A549 (cell line): ENCODE measurements at regions of chr11 and their contacts with region 1.

Region 1: GRCh38 chr11:130002846-130003716 is 446 bp upstream of the PRDM10 start:
- DNase-seq: peak; percentile 94 to 95
- ATAC-seq: peak; percentile 85 to 89
- H3K4me3 ChIP-seq: peak overlapping the region; percentile 63
- H3K27ac ChIP-seq: peak overlapping the region; percentile 99 to 100
- H3K4me1 ChIP-seq: peaks cover 19% of the 10 kb centered on the region
- CTCF ChIP-seq: no peak
- EP300 ChIP-seq: no peak
- POLR2A ChIP-seq: peak; percentile 36; the same call in 1 of the 2 replicates
- RAD21 ChIP-seq: no peak

Region 2: GRCh38 chr11:129815596-129816461 is 187.3 kb before region 1 on chr11 and contains the start of gene TMEM45B:
- CTCF ChIA-PET with region 1: no interaction called
- POLR2A ChIA-PET with region 1: no interaction called
- DNase-seq: no peak
- ATAC-seq: peak; percentile 48 to 63; a peak in 5 of 6 replicates
- H3K4me3 ChIP-seq: peak within 1 kb of the TSS; percentile 34; the same call in 2 of the 3 replicates
- H3K27ac ChIP-seq: no peak within 1 kb of the TSS
- H3K4me1 ChIP-seq: no peaks in the 10 kb centered on the region
- CTCF ChIP-seq: no peak
- EP300 ChIP-seq: no peak
- POLR2A ChIP-seq: no peak
- RAD21 ChIP-seq: no peak
- polyA plus RNA-seq, gene TMEM45B: 0.13 and 0.44 TPM in 2 replicates

Region 3: DNA sequence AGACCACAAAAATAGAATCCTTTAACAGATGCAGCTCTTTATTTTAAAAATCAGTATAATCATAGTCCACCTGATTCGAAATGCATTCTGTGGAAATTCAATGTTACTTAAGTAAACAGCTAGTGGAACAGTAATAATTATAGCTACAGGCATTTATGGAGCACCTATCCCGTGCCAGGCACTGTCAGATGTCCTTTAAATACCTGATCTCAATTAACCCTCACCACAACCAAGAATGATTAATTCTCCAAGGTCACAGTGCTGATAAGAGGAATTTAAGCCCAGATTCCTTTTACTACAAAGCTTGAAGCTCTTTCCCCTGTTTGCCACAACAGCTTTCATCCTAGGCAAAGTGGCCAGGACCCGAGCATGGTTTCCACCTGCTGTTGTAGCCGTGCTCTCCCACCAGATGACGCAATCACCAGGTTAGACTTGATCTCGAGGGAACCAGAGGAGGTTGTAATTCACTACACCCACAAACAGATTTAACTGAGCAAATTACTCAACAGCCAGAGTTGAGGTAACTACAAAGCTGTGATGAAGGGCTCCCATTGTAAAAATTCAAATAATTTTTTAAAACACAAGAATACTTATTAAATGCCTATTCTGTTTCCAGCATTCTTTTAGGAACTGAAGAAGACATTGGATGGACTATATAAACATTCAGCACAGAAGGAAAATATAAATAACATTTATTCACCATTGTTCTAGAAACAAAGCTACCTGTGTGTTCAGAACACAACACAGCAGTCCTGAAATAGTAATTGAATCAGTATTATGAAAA is 10.7 kb before region 1 on chr11:
- CTCF ChIA-PET with region 1: interaction called, 5 read pairs
- POLR2A ChIA-PET with region 1: interaction called, 18 read pairs
- DNase-seq: peak; percentile 15 to 20
- ATAC-seq: 0 out of 6 replicates have a peak, but pooled peaks of 1 of the 2 experiments have one; percentile 38
- H3K4me3 ChIP-seq: no peak overlapping the region
- H3K27ac ChIP-seq: no peak overlapping the region
- H3K4me1 ChIP-seq: peaks cover 6% of the 10 kb centered on the region; the same call in 1 of the 3 replicates
- CTCF ChIP-seq: no peak
- EP300 ChIP-seq: no peak
- POLR2A ChIP-seq: no peak
- RAD21 ChIP-seq: peak in 1 of 2 experiments; percentile 10; a peak in 1 of 5 replicates

Region 4: DNA sequence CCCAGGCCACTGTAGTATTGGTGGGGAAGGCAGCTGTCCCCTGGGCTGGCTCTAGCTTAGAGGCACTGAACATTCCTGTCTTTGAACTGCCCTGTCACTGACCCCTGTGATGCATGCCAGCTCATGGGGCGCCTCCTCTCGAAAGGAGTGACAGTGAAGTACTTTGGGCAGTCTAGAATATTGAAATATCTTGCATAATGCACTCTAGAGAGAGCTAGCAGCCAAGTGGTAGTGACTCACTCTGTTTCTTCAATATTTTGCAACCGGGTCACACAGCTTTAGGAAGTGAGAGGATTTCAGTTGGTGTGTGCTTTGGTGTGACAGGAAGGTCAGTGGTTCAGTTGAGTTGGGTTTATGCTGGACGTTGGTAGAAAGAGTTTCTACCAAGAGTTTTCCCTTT is 121.0 kb after region 1 on chr11:
- CTCF ChIA-PET with region 1: interaction called, 4 read pairs
- POLR2A ChIA-PET with region 1: interaction called, 24 read pairs
- DNase-seq: peak; percentile 22 to 70
- ATAC-seq: peak; percentile 94 to 99
- H3K4me3 ChIP-seq: no peak overlapping the region
- H3K27ac ChIP-seq: peak overlapping the region; percentile 46 to 86
- H3K4me1 ChIP-seq: peaks cover 16% of the 10 kb centered on the region
- CTCF ChIP-seq: no peak
- EP300 ChIP-seq: peak in 1 of 2 experiments; percentile 34; a peak in 1 of 5 replicates
- POLR2A ChIP-seq: no peak
- RAD21 ChIP-seq: peak in 1 of 2 experiments; percentile 13; a peak in 1 of 5 replicates

Region 5: GRCh38 chr11:130145975-130146776 is 143.1 kb after region 1 on chr11:
- CTCF ChIA-PET with region 1: no interaction called
- POLR2A ChIA-PET with region 1: interaction called, 19 read pairs
- DNase-seq: peak; percentile 52 to 54
- ATAC-seq: peak; percentile 96 to 98
- H3K4me3 ChIP-seq: no peak overlapping the region
- H3K27ac ChIP-seq: peak overlapping the region in 1 of 2 experiments; percentile 61; a peak in 3 of 6 replicates
- H3K4me1 ChIP-seq: peaks cover 13% of the 10 kb centered on the region
- CTCF ChIP-seq: peak; percentile 25; the same call in 2 of the 3 replicates
- EP300 ChIP-seq: no peak
- POLR2A ChIP-seq: no peak
- RAD21 ChIP-seq: peak; percentile 28 to 36; a peak in 2 of 5 replicates

Region 6: DNA sequence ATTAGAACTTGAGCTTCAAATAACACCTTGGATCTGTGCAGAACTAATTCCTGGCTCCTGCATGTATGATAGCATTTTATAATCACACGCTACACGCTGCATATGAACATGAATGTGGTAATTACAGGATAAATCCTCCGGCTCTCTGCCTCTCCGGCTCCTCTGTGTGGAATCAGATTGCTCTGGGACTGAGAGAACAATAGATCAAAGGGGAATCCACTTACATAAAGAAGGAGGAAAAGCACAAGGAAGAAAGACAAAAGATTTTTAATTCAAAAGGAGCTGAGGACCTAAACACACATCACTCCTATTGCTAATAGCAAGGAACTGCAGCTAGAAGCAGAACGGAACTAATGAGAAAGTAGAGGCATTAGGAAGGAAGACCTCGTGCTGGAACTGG is 1608.2 kb after region 1 on chr11:
- CTCF ChIA-PET with region 1: no interaction called
- POLR2A ChIA-PET with region 1: interaction called, 10 read pairs
- DNase-seq: no peak
- ATAC-seq: no peak
- H3K4me3 ChIP-seq: no peak overlapping the region
- H3K27ac ChIP-seq: no peak overlapping the region
- H3K4me1 ChIP-seq: no peaks in the 10 kb centered on the region
- CTCF ChIP-seq: no peak
- EP300 ChIP-seq: no peak
- POLR2A ChIP-seq: no peak
- RAD21 ChIP-seq: no peak